ENCODE measurements at regions of chr17 and their contacts with region 1.

Region 1: DNA sequence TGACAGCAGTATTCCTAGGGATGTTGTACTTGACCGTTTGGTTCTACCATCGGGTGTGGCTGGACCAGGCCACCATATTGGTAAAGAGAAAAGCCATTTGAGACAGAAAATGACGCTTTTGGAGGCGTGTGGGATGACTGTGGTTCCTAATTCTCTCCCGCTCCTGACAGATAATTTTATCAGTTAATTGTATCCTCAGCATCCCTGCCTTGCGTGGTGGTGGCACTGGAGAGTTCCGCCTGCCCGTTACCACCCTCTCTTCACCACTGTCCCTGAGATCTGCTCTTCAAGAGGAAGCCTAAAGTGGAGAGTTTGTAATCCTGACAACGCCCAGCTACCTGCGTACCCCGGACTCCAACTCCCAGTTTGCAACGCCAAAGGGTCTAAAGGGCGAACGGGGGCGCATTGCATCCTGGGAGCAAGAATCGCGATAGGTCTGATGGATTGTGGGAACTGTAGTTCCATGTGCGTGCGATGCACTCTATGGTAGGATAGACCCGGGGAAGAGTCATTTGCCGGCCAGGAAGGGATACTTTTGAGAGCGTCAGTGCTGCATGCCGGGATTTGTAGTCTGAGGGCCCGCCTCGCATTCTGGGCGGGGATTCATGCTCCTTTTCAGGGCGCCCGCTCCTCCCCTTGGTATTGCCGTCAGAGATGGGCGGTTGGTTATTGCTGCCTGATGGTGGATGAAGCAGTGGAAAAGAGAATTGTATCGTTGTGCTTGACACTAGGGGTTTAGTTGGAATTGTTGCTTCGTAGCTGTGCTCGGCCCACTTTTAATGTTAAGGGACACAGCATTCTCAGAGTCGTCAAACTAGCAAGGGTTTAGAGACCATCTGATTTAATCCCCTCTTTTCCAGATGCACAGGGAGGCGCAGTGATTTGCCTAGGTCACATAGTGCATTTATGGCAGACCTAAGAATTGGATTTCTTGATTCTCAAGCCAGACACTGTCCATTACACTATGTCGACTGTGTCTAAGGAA is 965 bp upstream of the PHF12 start:
- DNase-seq: peak; percentile 94 to 97
- H3K4me3 ChIP-seq: peak overlapping the region; percentile 92
- H3K27ac ChIP-seq: peak overlapping the region; percentile 94
- H3K4me1 ChIP-seq: peaks cover 20% of the 10 kb centered on the region
- H3K27me3 ChIP-seq: no peaks in the 10 kb centered on the region
- CTCF ChIP-seq: no peak

Region 2: GRCh38 chr17:28041068-28041843 is 911.0 kb before region 1 on chr17:
- CTCF ChIA-PET with region 1: no interaction called
- POLR2A ChIA-PET with region 1: no interaction called
- intact Hi-C with region 1: no loop called
- DNase-seq: peak; percentile 98 to 99
- H3K4me3 ChIP-seq: peak overlapping the region; percentile 76
- H3K27ac ChIP-seq: no peak overlapping the region
- H3K4me1 ChIP-seq: peaks cover 29% of the 10 kb centered on the region
- H3K27me3 ChIP-seq: no peaks in the 10 kb centered on the region
- CTCF ChIP-seq: no peak

Region 3: DNA sequence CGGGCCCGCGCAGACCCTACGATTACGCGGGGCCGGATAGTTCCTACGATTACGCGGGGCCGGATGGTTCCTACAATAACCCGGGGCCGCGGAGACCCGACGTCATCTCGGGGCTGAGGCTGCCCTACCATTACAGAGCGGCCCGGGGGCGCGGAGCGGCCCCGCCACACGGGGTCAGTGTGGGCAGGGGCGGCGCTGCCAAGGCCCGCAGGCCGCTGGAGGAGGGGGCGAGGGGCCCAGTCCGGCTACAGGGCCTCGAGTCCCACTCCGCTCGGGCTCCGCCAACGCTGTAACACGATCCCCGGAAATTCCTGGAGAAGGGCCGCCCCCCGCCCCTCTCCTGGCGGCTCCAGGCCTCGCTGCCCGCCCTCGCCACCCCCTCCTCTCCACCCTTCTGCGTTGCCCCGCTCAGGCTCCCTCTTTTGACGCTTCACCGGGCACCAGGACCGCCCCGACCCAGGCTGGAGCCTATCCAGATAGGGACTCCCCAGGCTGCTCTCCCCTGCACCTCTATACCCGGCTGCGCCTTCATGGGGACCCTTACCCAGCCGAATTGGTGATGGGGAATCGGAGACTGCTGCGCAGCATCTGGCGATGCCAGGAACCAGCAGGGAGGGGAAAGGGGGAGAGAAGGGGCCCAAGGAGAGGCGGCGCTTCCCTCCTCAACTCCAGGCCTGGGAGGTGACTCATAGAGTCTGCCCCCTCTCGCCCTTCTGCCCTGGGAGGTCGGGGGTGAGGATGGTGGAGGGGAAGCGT is 234.5 kb before region 1 on chr17 and contains the start of gene RAB34:
- CTCF ChIA-PET with region 1: interaction called, 4 read pairs
- POLR2A ChIA-PET with region 1: interaction called, 15 read pairs
- intact Hi-C with region 1: loop called (anchors 2 kb)
- DNase-seq: peak; percentile 74 to 93
- H3K4me3 ChIP-seq: peak within 1 kb of the TSS; percentile 87
- H3K27ac ChIP-seq: peak within 1 kb of the TSS; percentile 82
- H3K4me1 ChIP-seq: peaks cover 35% of the 10 kb centered on the region
- H3K27me3 ChIP-seq: no peaks in the 10 kb centered on the region
- CTCF ChIP-seq: no peak; the same call in 1 of the 2 replicates
- total RNA-seq, gene RAB34: 161 and 174 TPM in 2 replicates

Region 4: DNA sequence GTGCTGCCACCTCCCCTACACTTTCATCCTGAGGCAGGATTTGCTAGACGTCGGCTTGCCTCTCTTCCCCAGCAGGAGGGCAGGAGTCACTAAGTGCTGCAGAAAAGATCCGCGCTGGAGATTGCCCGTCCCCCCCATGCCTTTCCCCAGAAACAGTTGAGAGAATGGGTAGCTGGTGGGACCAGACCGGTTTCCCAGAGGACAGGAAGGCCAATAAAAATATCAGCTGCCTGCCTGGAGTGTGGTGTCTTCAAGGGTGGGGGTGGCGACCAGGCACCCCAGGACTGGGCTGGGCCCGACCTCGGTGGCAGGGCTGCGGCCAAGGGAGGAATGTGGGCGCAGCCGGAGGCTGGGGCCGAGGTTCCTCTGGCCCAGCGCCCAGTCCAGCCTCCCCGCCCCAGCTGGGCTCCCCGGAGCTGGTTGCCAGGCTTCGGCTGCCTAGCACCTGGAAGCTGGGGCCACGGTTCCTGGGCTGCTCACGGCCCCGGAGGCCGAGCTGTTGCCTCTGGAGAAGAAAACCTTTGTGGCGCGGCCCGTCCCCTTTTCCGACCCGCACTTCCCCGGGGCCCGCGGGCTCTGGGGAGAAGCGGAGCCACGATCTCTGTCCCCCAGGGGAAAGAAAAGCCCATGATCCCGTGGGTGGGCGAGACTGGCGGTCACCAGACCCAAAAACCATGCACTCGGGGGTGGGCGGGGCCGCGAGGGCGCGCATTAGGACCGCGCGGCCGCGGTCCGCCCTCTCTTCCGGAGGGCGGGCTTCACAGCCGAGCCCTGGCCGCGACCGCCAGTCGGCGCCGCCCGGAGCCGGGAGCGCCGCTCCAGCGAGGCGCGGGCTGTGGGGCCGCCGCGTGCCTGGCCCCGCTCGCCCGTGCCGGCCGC is 208.8 kb before region 1 on chr17 and contains the start of gene TRAF4:
- CTCF ChIA-PET with region 1: interaction called, 3 read pairs
- POLR2A ChIA-PET with region 1: interaction called, 3 read pairs
- intact Hi-C with region 1: loop called (anchors 5 kb)
- DNase-seq: peak; percentile 94
- H3K4me3 ChIP-seq: peak within 1 kb of the TSS; percentile 97
- H3K27ac ChIP-seq: peak within 1 kb of the TSS; percentile 96
- H3K4me1 ChIP-seq: peaks cover 42% of the 10 kb centered on the region
- H3K27me3 ChIP-seq: no peaks in the 10 kb centered on the region
- CTCF ChIP-seq: peak; percentile 3; the same call in 1 of the 2 replicates
- total RNA-seq, gene TRAF4: 159 and 169 TPM in 2 replicates

Region 5: DNA sequence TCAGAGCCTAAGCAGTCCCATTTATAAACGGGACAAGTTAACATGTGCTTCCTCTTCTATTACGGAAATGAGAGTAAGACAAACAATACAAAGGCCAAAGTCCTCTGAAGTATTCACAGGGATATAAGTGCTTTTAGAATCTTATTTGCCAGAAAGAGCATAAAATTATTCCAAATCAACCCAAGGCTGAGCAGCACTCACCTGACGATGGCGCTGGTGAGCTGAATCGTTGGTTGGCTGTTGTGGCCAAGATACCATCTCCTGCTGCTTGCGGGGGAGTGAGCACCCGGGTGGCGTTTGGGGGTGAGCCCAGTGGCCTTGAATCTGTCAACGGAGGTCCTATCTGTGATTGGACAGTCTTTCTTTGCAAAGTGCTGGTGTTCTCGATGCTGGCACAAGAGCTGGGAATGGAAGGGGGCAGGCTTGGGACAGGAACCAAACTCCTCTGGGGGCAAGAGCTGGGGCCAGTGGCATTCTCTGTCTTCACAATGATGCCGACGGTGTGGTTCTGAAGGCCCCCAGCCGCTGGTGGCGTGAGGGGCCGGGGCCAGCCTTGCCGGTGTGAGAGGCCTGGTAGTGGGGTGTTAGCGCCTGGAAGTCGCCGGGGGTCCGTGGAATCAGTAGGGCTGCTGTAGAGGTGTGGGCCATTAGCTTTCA is 39.9 kb before region 1 on chr17:
- CTCF ChIA-PET with region 1: no interaction called
- POLR2A ChIA-PET with region 1: no interaction called
- intact Hi-C with region 1: no loop called
- DNase-seq: no peak
- H3K4me3 ChIP-seq: no peak overlapping the region
- H3K27ac ChIP-seq: no peak overlapping the region
- H3K4me1 ChIP-seq: no peaks in the 10 kb centered on the region
- H3K27me3 ChIP-seq: no peaks in the 10 kb centered on the region
- CTCF ChIP-seq: no peak; the same call in 1 of the 2 replicates

Region 6: DNA sequence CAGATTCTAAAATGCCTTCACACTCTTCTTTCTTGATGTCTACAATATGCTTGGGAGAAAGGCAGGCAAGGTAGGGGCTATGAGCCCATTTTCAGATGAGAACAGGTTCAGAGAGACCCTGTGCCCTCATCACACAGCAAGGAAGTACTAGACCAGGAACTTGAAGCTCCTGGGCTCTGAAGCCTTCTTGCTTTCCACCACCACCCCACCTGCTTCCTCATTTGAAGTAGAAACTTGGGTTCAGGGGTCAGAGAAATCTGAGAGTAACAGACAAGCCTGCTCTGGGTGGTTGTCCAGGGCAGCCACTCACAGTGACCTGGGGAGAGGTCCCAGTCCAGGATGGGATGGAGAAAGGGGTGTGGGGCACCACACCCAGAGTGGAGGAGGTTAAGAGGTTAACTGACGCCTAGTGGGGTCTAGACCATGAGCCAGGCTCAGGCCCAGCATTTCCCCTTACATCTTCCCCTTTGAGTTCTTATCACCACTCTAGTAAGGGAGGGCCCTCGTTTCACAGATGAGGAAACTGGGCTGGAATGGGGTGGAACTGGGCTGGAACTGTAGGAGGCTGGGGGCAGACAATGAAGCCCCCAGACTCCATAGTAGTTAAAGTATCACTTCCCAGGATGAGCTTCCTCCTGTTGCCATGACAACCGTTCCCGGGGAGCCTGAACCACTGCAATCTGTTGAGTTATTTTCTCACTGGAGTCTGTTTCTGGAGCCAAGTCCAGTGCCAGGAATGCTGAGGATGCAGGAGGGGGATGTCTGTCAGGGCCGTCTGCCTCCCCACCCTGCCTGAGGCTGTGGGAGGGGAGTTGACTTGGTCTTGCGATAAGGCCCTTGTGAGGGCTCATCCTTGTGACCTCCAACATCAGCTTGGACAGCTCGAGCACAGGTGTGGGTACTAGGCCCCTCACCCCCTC is 15.2 kb after region 1 on chr17:
- CTCF ChIA-PET with region 1: interaction called, 15 read pairs
- POLR2A ChIA-PET with region 1: no interaction called
- intact Hi-C with region 1: no loop called
- DNase-seq: no peak
- H3K4me3 ChIP-seq: no peak overlapping the region
- H3K27ac ChIP-seq: no peak overlapping the region
- H3K4me1 ChIP-seq: peaks cover 11% of the 10 kb centered on the region; the same call in 1 of the 2 replicates
- H3K27me3 ChIP-seq: no peaks in the 10 kb centered on the region
- CTCF ChIP-seq: no peak

Region 7: GRCh38 chr17:29568331-29569244 is 616.3 kb after region 1 on chr17 and contains the start of gene TP53I13:
- CTCF ChIA-PET with region 1: no interaction called
- POLR2A ChIA-PET with region 1: no interaction called
- intact Hi-C with region 1: loop called (anchors 5 kb)
- DNase-seq: peak; percentile 64 to 89
- H3K4me3 ChIP-seq: peak within 1 kb of the TSS; percentile 76
- H3K27ac ChIP-seq: peak within 1 kb of the TSS; percentile 53
- H3K4me1 ChIP-seq: peaks cover 28% of the 10 kb centered on the region
- H3K27me3 ChIP-seq: no peaks in the 10 kb centered on the region
- CTCF ChIP-seq: no peak
- total RNA-seq, gene TP53I13: 46.9 and 68.8 TPM in 2 replicates